ENCODE measurements at regions of chr14 and their contacts with region 1.

Region 1: DNA sequence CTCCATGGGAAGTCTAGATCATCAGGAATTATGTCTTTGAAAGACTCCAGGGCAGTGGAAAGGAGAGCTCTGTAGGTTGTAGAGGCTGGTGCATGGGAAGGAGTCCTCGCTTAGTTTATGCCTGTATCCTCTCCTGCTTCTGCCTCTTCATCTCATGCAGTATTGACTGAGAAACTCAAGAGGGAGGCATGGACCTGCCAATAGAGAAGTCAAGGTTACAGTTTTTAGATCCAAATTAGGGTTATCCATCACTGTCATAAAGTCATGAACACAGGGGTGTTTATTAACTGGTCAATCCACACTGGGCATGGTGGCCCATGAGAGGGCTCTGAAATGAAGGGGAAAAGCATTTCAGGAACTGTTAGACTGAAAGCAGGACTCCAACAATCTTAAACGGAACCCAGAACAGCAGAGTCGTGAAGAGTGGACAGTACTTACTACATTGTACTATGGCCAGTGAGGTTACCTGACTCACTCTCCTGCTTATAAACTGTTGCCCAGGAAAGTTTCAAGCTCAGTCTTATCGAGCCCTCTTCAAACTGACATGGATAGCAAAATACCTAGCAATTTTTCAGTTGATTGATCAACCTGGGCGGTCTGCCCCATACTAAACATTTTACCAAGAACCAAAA is 30.1 kb upstream of the DHRS7 start:
- DNase-seq: peak in 2 of 9 experiments; percentile 13 to 33
- ATAC-seq: peak; percentile 52
- H3K4me3 ChIP-seq: no peak overlapping the region
- H3K4me3 Mint-ChIP-seq: no peak overlapping the region
- H3K27ac ChIP-seq: no peak overlapping the region
- H3K27ac Mint-ChIP-seq: no peak overlapping the region
- H3K4me1 ChIP-seq: no peaks in the 10 kb centered on the region
- H3K4me1 Mint-ChIP-seq: no peaks in the 10 kb centered on the region
- H3K27me3 ChIP-seq: peaks cover 0 to 3% of the 10 kb centered on the region in 2 experiments
- H3K27me3 Mint-ChIP-seq: peaks cover 5% of the 10 kb centered on the region
- CTCF ChIP-seq: no peak

Region 2: DNA sequence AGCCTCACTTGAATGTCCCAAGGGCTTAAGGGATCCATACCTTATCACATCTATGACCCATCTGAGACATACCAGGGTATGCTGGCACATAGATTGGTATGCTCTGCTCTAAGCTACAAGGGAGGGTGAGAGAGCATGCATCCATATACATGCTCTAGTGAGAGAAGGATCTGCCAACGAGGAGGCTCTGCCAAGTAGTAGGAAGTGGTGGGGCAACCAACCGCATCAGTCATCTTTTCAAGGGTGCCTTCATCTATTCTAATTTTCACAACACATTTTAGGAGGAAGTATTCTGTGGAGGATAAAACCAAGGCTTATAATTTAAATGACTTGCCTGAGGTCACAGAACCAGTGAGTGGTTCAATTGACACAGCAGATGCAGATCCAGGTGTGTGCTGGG is 47.1 kb after region 1 on chr14:
- CTCF ChIA-PET with region 1: no interaction called
- POLR2A ChIA-PET with region 1: no interaction called
- intact Hi-C with region 1: no loop called
- DNase-seq: no peak
- ATAC-seq: no peak
- H3K4me3 ChIP-seq: no peak overlapping the region
- H3K4me3 Mint-ChIP-seq: no peak overlapping the region
- H3K27ac ChIP-seq: no peak overlapping the region
- H3K27ac Mint-ChIP-seq: no peak overlapping the region
- H3K4me1 ChIP-seq: peaks cover 6% of the 10 kb centered on the region
- H3K4me1 Mint-ChIP-seq: peaks cover 8% of the 10 kb centered on the region
- H3K27me3 ChIP-seq: no peaks in the 10 kb centered on the region
- H3K27me3 Mint-ChIP-seq: no peaks in the 10 kb centered on the region
- CTCF ChIP-seq: no peak

Region 3: DNA sequence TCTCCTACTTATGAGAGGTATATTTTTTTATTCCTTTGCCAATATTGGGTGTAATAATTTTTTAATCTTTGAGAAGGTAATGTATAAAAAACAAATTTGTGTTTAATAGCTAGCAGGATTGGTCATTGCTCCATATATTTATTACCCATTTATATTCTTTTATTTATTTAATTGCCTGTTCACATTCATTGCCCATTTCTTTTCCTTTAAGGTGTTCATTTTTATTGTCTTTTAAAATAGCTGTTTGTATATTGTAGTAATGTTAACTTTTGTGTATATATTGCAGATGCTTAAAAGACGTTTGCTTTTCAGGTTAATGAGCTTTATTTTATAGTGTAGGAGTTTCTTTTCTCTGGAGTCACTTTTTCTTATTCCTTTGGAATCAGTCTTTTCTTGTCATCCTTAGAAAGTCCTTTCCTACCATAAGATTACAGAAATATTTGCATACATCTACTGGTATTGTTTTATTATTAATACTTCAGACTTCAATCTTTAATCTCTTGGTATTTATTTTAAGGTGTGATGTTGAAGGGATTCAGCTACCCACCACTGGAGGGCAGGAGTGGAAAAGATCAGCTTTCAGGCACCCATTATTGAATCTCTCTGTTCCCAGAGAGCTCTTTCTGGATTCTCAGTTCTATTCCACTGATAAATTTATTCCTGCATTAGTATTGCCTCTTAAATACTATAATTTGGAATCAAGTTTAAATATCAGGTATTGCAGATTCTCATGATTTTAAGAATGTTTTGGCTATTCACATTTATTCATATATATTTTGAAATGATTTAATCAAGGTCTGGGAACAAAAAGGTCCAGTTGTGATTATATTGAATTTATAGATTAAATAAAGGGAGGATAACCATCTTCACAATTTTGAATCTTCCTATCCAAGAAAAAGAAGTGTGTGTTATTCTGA is 71.0 kb after region 1 on chr14:
- CTCF ChIA-PET with region 1: interaction called, 4 read pairs
- POLR2A ChIA-PET with region 1: no interaction called
- intact Hi-C with region 1: loop called in 1 of 2 experiments (anchors 2 kb)
- DNase-seq: peak in 5 of 9 experiments; percentile 22 to 57 (median 29)
- ATAC-seq: peak; percentile 61
- H3K4me3 ChIP-seq: no peak overlapping the region
- H3K4me3 Mint-ChIP-seq: no peak overlapping the region
- H3K27ac ChIP-seq: no peak overlapping the region
- H3K27ac Mint-ChIP-seq: no peak overlapping the region
- H3K4me1 ChIP-seq: peaks cover 6% of the 10 kb centered on the region
- H3K4me1 Mint-ChIP-seq: peaks cover 33% of the 10 kb centered on the region
- H3K27me3 ChIP-seq: no peaks in the 10 kb centered on the region
- H3K27me3 Mint-ChIP-seq: no peaks in the 10 kb centered on the region
- CTCF ChIP-seq: peak; percentile 75

Region 4: DNA sequence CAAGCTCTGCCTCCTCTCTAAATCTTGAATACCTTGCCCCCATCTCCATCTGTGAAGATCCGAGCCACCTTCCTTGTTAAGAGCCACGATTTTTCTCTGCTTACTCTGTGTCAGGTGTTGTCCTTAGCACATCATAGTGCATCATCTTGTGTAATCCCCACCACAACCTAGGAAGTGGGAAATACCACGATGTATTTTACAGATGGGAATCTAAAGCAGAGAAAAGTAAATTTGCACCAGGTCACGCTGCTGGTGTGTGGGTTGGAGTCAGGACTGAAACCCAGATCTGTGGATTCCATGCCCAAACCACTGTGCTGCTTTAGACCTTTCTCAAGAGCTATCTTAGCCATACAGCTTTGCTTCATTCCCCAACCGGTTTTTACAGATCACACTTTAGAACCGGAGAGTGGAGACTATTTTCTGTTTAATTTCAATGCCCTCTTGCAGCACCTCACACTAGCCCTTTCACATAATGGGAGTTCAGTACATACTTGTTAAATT is 148.3 kb after region 1 on chr14:
- CTCF ChIA-PET with region 1: no interaction called
- POLR2A ChIA-PET with region 1: no interaction called
- intact Hi-C with region 1: no loop called
- DNase-seq: no peak
- ATAC-seq: no peak
- H3K4me3 ChIP-seq: no peak overlapping the region
- H3K4me3 Mint-ChIP-seq: no peak overlapping the region
- H3K27ac ChIP-seq: no peak overlapping the region
- H3K27ac Mint-ChIP-seq: no peak overlapping the region
- H3K4me1 ChIP-seq: no peaks in the 10 kb centered on the region
- H3K4me1 Mint-ChIP-seq: peaks cover 4% of the 10 kb centered on the region
- H3K27me3 ChIP-seq: no peaks in the 10 kb centered on the region
- H3K27me3 Mint-ChIP-seq: peaks cover 10% of the 10 kb centered on the region
- CTCF ChIP-seq: no peak

Measured in CD8-positive, alpha-beta T cell (primary cell).